GM12878 (cell line): ENCODE measurements at regions of chr18 and their contacts with region 1.

Region 1: DNA sequence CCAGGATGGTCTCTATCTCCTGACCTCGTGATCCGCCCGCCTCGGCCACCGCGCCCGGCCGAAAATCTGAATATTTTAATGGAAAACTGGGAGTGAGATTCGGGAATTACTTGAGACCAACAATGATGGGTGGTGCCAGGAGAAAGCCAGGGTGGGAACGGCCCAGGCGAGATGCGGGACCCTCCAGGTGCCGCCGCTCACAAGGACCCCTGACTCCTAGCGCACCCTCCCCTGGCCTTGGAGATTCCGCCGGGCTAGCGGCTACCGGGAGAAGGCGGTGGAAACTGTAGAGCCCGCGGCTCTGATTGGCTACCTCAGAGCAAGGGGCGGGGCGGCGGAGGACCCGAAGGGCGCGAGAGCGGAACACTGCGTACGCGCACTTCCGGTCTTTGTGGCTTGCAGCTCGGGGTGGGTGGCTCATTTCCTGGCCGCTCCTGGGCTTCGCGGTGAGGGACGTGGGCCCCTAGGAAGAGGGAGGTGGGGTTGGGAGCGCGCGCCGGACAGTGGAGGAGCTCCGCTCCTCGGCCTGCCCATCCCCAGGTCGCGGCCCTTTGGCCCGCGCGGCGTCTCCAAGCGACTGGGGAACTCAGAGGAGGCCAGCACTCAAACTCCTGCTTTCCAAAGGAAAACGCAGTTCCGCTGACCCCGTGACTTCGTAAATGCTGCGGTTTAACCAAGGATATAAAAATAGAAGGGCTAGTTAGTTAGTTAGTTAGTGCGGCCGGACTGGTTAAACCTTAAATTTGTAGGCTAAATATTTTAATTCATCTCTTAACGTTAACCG is at the start of gene ZNF397:
- DNase-seq: peak; percentile 73
- ATAC-seq: peak; percentile 99
- H3K4me3 ChIP-seq: peak within 1 kb of the TSS; percentile 90
- H3K27ac ChIP-seq: peak within 1 kb of the TSS; percentile 88
- H3K4me1 ChIP-seq: no peaks in the 10 kb centered on the region
- H3K27me3 ChIP-seq: no peaks in the 10 kb centered on the region
- CTCF ChIP-seq: no peak
- EP300 ChIP-seq: peak in 1 of 2 experiments; percentile 61; a peak in 1 of 4 replicates
- POLR2A ChIP-seq: peak; percentile 97
- RAD21 ChIP-seq: no peak
- polyA plus RNA-seq, gene ZNF397: 5.2 to 5.3 TPM

Region 2: DNA sequence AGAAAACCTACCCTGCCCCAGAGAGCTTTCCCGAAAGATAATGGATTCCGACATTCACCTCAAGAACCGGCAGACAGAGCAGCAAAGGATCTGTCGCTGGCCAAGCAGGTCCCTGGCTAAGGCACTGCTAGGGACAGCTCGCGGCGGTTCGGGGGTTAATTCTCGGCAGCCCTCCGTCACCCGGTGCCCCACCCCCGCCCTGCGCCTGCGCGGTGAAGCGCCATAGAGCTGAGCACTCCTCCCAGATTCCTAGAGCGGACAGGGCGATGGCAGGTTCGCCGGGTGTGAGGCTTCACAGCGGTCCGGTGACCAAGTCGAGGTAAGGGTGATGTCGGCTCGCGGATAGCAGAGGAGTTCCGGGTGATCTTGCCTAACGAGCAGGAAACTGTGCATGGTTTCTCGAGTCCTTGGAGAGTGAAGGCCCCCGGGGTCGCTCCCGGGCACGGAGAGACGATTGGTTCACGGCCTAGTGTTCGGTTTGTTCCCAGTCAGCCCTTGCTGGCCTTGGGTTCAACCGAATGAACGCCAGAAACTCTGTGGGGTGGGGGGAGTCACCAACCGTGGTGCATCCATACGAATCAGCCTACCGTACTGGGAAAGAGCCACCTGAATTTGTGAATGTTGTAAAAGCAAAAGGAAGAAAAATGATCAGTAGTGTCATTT is 49.3 kb after region 1 on chr18 and contains the start of gene ZSCAN30:
- CTCF ChIA-PET with region 1: interaction called, 5 read pairs
- POLR2A ChIA-PET with region 1: interaction called, 9 read pairs
- RAD21 ChIA-PET with region 1: interaction called, 3 read pairs
- SMC1A ChIA-PET with region 1: interaction called, 19 read pairs
- in situ Hi-C with region 1: loop called (anchors 5 kb)
- intact Hi-C with region 1: loop called (anchors 1 kb)
- DNase-seq: peak; percentile 86
- ATAC-seq: peak; percentile 97
- H3K4me3 ChIP-seq: peak within 1 kb of the TSS; percentile 83
- H3K27ac ChIP-seq: peak within 1 kb of the TSS; percentile 92
- H3K4me1 ChIP-seq: no peaks in the 10 kb centered on the region; the same call in 1 of the 2 replicates
- H3K27me3 ChIP-seq: no peaks in the 10 kb centered on the region
- CTCF ChIP-seq: no peak
- EP300 ChIP-seq: no peak
- POLR2A ChIP-seq: peak; percentile 97
- RAD21 ChIP-seq: no peak
- polyA plus RNA-seq, gene ZSCAN30: 2.7 to 3.2 TPM

Region 3: DNA sequence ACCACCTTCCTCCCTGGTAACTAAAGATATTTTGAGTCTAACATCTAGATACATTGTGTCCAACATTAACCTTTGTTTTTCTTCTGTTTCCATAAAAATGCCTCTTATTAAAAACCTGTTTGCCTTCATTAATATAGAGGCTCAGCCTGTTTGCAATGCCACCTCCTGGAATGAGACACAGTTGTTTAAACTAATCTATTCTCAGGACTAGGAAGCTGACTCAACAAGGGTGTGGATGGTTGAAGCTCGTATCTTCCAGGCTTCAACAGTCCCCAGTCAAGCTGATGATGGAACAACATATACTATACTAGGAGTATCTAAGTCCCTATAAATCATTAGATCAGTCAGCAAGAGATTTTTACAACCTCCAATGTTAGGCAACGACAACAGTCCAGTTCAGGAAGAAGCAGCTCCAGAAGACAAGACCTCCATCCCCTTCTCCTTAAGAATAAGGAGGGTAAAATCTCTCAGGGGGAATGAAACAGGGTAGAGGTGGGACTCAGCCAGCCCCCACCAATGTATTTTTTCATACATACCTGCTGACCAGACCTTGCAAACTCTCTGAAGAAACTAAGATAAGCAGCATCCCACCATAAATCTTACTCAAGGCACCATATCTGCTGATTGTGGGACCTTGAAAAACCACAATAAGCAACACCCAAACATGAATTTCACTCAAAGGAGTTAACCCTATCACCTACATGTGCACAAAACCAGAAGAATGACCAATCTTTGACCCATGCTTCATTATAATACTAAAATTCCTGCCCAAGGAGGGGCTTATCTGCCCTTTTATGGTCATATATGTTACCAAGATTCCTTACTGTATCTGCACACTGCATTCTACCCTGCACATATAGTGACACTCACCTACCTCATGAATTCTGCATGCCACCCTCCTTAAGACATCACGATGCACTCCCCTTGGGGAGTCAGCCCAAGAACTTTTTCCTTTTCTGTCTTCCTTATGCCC is 81.9 kb after region 1 on chr18:
- CTCF ChIA-PET with region 1: no interaction called
- POLR2A ChIA-PET with region 1: no interaction called
- RAD21 ChIA-PET with region 1: no interaction called
- SMC1A ChIA-PET with region 1: no interaction called
- in situ Hi-C with region 1: no loop called
- intact Hi-C with region 1: no loop called
- DNase-seq: no peak
- ATAC-seq: no peak
- H3K4me3 ChIP-seq: no peak overlapping the region
- H3K27ac ChIP-seq: no peak overlapping the region
- H3K4me1 ChIP-seq: no peaks in the 10 kb centered on the region
- H3K27me3 ChIP-seq: no peaks in the 10 kb centered on the region
- CTCF ChIP-seq: no peak
- EP300 ChIP-seq: no peak
- POLR2A ChIP-seq: no peak
- RAD21 ChIP-seq: no peak

Region 4: GRCh38 chr18:35343936-35344735 is 103.3 kb after region 1 on chr18 and contains the start of gene ZNF24:
- CTCF ChIA-PET with region 1: interaction called, 8 read pairs
- POLR2A ChIA-PET with region 1: interaction called, 10 read pairs
- RAD21 ChIA-PET with region 1: interaction called, 6 read pairs
- SMC1A ChIA-PET with region 1: interaction called, 16 read pairs
- in situ Hi-C with region 1: loop called (anchors 5 kb)
- intact Hi-C with region 1: loop called (anchors 2 kb)
- DNase-seq: peak; percentile 61
- ATAC-seq: peak; percentile 95
- H3K4me3 ChIP-seq: peak within 1 kb of the TSS; percentile 82
- H3K27ac ChIP-seq: peak within 1 kb of the TSS; percentile 98
- H3K4me1 ChIP-seq: peaks cover 7% of the 10 kb centered on the region; the same call in 1 of the 2 replicates
- H3K27me3 ChIP-seq: no peaks in the 10 kb centered on the region
- CTCF ChIP-seq: no peak
- EP300 ChIP-seq: 0 out of 4 replicates have a peak, but pooled peaks of 1 of the 2 experiments have one; percentile 21
- POLR2A ChIP-seq: peak; percentile 91
- RAD21 ChIP-seq: no peak
- polyA plus RNA-seq, gene ZNF24: 19.3 to 41.6 TPM

Region 5: GRCh38 chr18:35355140-35355618 is 114.3 kb after region 1 on chr18:
- CTCF ChIA-PET with region 1: interaction called, 4 read pairs
- POLR2A ChIA-PET with region 1: interaction called, 4 read pairs
- RAD21 ChIA-PET with region 1: interaction called, 3 read pairs
- SMC1A ChIA-PET with region 1: interaction called, 12 read pairs
- in situ Hi-C with region 1: no loop called
- intact Hi-C with region 1: no loop called
- DNase-seq: no peak
- ATAC-seq: peak; percentile 100
- H3K4me3 ChIP-seq: no peak overlapping the region
- H3K27ac ChIP-seq: no peak overlapping the region
- H3K4me1 ChIP-seq: no peaks in the 10 kb centered on the region
- H3K27me3 ChIP-seq: no peaks in the 10 kb centered on the region
- CTCF ChIP-seq: peak; percentile 73 to 76 (median 76)
- EP300 ChIP-seq: no peak
- POLR2A ChIP-seq: no peak
- RAD21 ChIP-seq: peak; percentile 67

Region 6: DNA sequence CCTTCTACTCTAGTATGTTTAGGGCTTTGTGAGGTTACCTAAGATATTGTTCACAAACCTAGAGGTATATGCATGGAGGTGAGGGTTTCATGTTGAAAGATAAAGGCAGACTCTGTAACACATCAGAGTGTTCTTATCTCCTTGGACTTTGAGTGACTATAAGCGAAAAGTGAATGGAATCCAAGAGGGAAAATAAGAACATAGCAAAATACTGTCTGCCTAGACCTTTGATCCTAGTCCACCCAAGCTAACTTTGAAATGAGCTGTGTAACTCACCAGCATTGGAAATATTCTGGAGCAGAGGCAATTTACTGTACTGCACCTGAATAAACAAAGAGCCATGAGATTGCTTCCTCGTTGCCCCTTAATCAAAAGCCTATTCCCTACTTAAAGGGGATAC is 312.4 kb after region 1 on chr18:
- CTCF ChIA-PET with region 1: no interaction called
- POLR2A ChIA-PET with region 1: interaction called, 10 read pairs
- RAD21 ChIA-PET with region 1: no interaction called
- SMC1A ChIA-PET with region 1: no interaction called
- in situ Hi-C with region 1: no loop called
- intact Hi-C with region 1: no loop called
- DNase-seq: no peak
- ATAC-seq: no peak
- H3K4me3 ChIP-seq: no peak overlapping the region
- H3K27ac ChIP-seq: no peak overlapping the region
- H3K4me1 ChIP-seq: no peaks in the 10 kb centered on the region
- H3K27me3 ChIP-seq: no peaks in the 10 kb centered on the region
- CTCF ChIP-seq: no peak
- EP300 ChIP-seq: no peak
- POLR2A ChIP-seq: no peak
- RAD21 ChIP-seq: no peak